ENCODE measurements at regions of chrX and their contacts with region 1.

Region 1: DNA sequence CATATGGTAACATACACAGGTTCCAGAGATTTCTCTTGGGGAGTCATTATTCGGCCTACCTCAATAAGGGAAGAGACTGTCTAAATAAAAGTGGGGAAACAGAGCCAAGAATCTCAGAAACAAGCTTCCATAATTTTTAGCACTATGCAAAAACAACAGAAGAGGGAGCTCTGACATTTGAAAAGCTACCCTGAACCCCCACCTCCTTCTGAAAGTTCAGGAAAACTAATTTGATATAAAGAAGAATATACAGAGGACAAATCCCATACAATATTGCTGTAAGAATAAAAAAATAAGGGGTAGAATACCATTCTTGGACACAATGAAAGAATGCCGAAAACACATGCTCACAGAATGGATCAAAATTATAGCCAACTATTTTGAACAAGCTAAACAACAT is 14.3 kb upstream of the ZNF41 start:
- DNase-seq: no peak
- ATAC-seq: no peak
- H3K4me3 ChIP-seq: no peak overlapping the region
- H3K27ac ChIP-seq: no peak overlapping the region
- H3K4me1 ChIP-seq: no peaks in the 10 kb centered on the region
- H3K27me3 ChIP-seq: no peaks in the 10 kb centered on the region
- CTCF ChIP-seq: peak; percentile 15 to 43 (median 20); a peak in 4 of 6 replicates
- EP300 ChIP-seq: no peak
- POLR2A ChIP-seq: no peak
- RAD21 ChIP-seq: peak; percentile 65

Region 2: GRCh38 chrX:47206316-47206715 is 291.0 kb before region 1 on chrX:
- CTCF ChIA-PET with region 1: no interaction called
- POLR2A ChIA-PET with region 1: no interaction called
- RAD21 ChIA-PET with region 1: no interaction called
- SMC1A ChIA-PET with region 1: no interaction called
- in situ Hi-C with region 1: no loop called
- intact Hi-C with region 1: no loop called
- DNase-seq: no peak
- ATAC-seq: no peak
- H3K4me3 ChIP-seq: no peak overlapping the region
- H3K27ac ChIP-seq: no peak overlapping the region
- H3K4me1 ChIP-seq: no peaks in the 10 kb centered on the region
- H3K27me3 ChIP-seq: no peaks in the 10 kb centered on the region
- CTCF ChIP-seq: no peak
- EP300 ChIP-seq: no peak
- POLR2A ChIP-seq: no peak
- RAD21 ChIP-seq: no peak

Region 3: DNA sequence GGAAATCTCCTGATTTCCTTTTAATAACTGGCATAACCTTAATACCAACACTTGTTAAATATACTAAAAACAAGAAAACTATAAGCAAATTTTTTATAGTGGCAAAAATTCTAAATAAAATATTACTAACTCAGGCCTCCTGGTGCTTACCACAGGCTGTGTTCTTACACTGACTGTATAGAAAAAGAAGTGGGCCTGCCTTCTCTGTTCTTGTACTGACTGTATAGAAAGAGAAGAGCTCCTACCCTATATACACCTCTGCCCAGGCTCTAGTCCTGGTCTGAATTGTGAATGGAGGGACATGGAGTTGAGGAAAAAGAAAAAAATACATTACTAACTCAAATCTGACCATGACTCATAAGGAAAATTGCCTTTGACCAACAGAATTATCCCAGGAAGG is 21.8 kb before region 1 on chrX:
- CTCF ChIA-PET with region 1: no interaction called
- POLR2A ChIA-PET with region 1: no interaction called
- RAD21 ChIA-PET with region 1: no interaction called
- SMC1A ChIA-PET with region 1: no interaction called
- in situ Hi-C with region 1: no loop called
- intact Hi-C with region 1: no loop called
- DNase-seq: no peak
- ATAC-seq: no peak
- H3K4me3 ChIP-seq: no peak overlapping the region
- H3K27ac ChIP-seq: no peak overlapping the region
- H3K4me1 ChIP-seq: no peaks in the 10 kb centered on the region
- H3K27me3 ChIP-seq: no peaks in the 10 kb centered on the region
- CTCF ChIP-seq: no peak
- EP300 ChIP-seq: no peak
- POLR2A ChIP-seq: no peak
- RAD21 ChIP-seq: no peak

Region 4: DNA sequence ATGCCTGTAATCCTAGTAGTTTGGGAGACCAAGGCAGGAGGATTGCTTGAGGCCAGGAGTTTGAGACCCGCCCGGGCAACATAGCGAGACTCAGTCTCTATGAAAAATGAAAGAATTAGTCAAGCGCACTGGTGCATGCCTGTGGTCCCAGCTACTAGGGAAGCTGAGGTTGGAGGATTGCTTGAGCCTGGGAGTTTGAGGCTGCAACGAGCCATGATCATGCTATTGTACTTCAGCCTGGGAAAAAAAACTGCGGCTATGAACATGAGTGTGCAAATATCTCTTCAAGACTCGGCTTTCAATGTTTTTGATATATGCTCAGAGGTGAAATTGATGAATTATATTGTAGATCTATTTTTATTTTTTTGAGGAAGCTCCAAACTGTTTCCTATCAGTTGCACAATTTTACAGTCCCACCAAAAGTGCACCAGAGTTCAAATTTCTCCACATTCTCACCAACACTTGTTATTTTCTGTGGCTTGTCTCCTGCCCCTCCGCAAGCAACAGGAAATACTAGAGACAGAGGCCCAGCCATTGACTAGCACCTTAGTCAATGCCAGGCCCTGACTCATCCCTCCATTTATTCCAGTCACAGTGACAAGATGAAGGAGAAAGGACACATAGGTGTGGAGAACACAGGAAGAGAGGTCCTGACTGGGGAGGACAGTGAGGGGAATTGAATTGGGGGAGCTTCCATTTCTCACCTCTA is 18.8 kb after region 1 on chrX:
- CTCF ChIA-PET with region 1: interaction called, 178 read pairs
- POLR2A ChIA-PET with region 1: interaction called, 6 read pairs
- RAD21 ChIA-PET with region 1: interaction called, 16 read pairs
- SMC1A ChIA-PET with region 1: interaction called, 52 read pairs
- in situ Hi-C with region 1: no loop called
- intact Hi-C with region 1: no loop called
- DNase-seq: no peak
- ATAC-seq: no peak
- H3K4me3 ChIP-seq: no peak overlapping the region
- H3K27ac ChIP-seq: no peak overlapping the region
- H3K4me1 ChIP-seq: no peaks in the 10 kb centered on the region
- H3K27me3 ChIP-seq: no peaks in the 10 kb centered on the region
- CTCF ChIP-seq: no peak
- EP300 ChIP-seq: no peak
- POLR2A ChIP-seq: no peak
- RAD21 ChIP-seq: no peak

Region 5: DNA sequence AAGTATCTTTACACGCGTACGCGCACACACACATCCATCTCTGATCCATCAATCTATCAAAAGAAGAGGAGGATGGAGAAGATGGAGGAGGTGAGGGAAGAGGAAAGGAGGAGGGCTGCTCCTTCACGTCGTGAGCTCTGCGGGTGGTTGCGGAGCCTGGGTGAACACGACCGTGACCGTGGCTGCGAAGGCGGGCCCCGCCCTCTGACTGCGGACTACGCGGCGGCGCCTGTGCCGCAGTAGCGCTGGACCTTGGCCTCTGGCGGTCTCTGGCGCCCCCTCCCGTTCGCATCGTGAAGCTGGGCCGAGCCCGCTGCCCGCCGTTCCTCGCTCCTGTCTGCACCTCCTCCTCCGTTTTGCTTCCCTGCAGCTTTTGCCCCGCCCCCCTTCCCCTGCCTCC is 26.0 kb after region 1 on chrX:
- CTCF ChIA-PET with region 1: interaction called, 178 read pairs
- POLR2A ChIA-PET with region 1: interaction called, 6 read pairs
- RAD21 ChIA-PET with region 1: interaction called, 25 read pairs
- SMC1A ChIA-PET with region 1: interaction called, 52 read pairs
- in situ Hi-C with region 1: no loop called
- intact Hi-C with region 1: loop called (anchors 1 kb)
- DNase-seq: no peak
- ATAC-seq: peak; percentile 99
- H3K4me3 ChIP-seq: peak overlapping the region; percentile 50
- H3K27ac ChIP-seq: peak overlapping the region; percentile 10; the same call in 1 of the 2 replicates
- H3K4me1 ChIP-seq: no peaks in the 10 kb centered on the region
- H3K27me3 ChIP-seq: no peaks in the 10 kb centered on the region
- CTCF ChIP-seq: peak; percentile 54 to 85 (median 81); a peak in 5 of 6 replicates
- EP300 ChIP-seq: no peak
- POLR2A ChIP-seq: no peak
- RAD21 ChIP-seq: peak; percentile 72

Region 6: GRCh38 chrX:47605024-47605423 is 107.8 kb after region 1 on chrX:
- CTCF ChIA-PET with region 1: no interaction called
- POLR2A ChIA-PET with region 1: no interaction called
- RAD21 ChIA-PET with region 1: no interaction called
- SMC1A ChIA-PET with region 1: no interaction called
- in situ Hi-C with region 1: no loop called
- intact Hi-C with region 1: no loop called
- DNase-seq: no peak
- ATAC-seq: no peak
- H3K4me3 ChIP-seq: no peak overlapping the region
- H3K27ac ChIP-seq: no peak overlapping the region
- H3K4me1 ChIP-seq: no peaks in the 10 kb centered on the region
- H3K27me3 ChIP-seq: no peaks in the 10 kb centered on the region
- CTCF ChIP-seq: no peak
- EP300 ChIP-seq: no peak
- POLR2A ChIP-seq: no peak
- RAD21 ChIP-seq: no peak

Region 7: GRCh38 chrX:47644557-47645091 is 147.4 kb after region 1 on chrX:
- CTCF ChIA-PET with region 1: interaction called, 13 read pairs
- POLR2A ChIA-PET with region 1: interaction called, 4 read pairs
- RAD21 ChIA-PET with region 1: no interaction called
- SMC1A ChIA-PET with region 1: no interaction called
- in situ Hi-C with region 1: no loop called
- intact Hi-C with region 1: no loop called
- DNase-seq: no peak
- ATAC-seq: peak; percentile 90
- H3K4me3 ChIP-seq: no peak overlapping the region
- H3K27ac ChIP-seq: no peak overlapping the region
- H3K4me1 ChIP-seq: no peaks in the 10 kb centered on the region; the same call in 1 of the 2 replicates
- H3K27me3 ChIP-seq: no peaks in the 10 kb centered on the region
- CTCF ChIP-seq: peak; percentile 39 to 59 (median 51); a peak in 4 of 6 replicates
- EP300 ChIP-seq: no peak
- POLR2A ChIP-seq: no peak
- RAD21 ChIP-seq: peak; percentile 19; the same call in 1 of the 2 replicates